ENCODE measurements at regions of chr1 and their contacts with region 1.

Region 1: GRCh38 chr1:214328770-214329469 is 48.0 kb downstream of the SMYD2 start:
- DNase-seq: peak; percentile 86
- ATAC-seq: peak; percentile 92
- H3K4me3 Mint-ChIP-seq: no peak overlapping the region
- H3K27ac Mint-ChIP-seq: no peak overlapping the region
- H3K4me1 Mint-ChIP-seq: peaks cover 9% of the 10 kb centered on the region
- H3K27me3 Mint-ChIP-seq: no peaks in the 10 kb centered on the region

Region 2: DNA sequence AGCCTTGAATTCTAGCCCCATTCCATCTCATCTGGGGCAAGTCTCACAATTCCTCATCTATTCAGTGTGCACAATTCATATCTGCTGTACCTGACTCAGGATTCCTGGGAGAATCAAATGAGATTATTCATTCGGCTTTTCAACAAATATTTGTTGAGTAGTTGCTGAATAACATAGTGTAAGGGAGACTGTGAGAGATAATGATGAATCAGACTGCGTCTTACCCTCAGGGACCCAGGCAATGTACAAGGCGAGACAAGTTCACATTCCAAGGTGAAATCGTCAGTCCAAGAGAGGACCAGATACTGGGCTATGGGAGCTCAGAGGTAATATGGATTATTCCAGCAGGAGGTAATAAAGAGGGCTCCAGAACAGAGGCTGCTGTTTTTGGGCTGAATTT is 115.8 kb before region 1 on chr1:
- CTCF ChIA-PET with region 1: interaction called, 42 read pairs
- DNase-seq: no peak
- ATAC-seq: no peak
- H3K4me3 Mint-ChIP-seq: no peak overlapping the region
- H3K27ac Mint-ChIP-seq: no peak overlapping the region
- H3K4me1 Mint-ChIP-seq: no peaks in the 10 kb centered on the region
- H3K27me3 Mint-ChIP-seq: peaks cover 42% of the 10 kb centered on the region

Region 3: DNA sequence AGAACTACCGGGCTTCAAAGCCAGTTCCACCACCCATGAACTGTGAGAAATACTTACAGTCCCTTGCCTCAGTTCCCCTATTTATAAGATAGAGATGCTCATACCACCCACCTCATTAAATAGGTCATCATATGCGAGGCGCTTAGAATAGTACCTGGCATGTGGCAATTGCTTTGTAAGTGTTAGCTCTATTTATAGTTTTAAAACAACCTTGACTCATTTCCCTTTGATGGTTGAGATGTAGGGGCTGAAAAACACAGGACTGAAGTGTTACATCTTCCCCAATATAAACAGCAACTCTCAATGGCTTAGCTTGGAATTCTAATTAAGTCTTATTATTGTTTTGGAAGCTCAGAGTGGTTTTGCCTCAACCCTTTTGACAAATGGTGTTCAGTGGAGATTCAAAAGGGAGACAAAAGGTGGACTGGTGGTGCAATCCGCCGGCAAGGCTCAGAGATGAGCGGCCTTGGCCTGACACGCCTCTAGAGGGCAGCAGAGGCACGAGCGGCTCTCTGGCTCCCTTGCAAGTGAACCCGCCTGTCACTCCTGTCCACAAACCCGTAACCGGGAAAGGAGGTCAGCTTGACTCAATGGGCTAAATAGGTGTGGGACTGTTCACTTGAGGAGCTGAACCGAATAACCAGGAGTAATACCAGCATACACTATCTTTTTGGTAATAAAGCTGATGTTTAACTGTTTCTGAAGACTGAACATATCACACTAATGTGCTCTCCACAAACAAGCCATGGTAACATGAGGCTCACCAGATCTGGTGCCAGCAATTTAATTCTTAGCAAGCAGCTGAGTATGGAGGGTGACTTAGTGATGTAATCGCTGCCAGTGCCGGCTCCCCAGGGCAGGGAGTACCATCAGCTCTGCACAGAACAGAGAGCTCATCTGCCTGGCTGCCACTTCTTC is 67.5 kb before region 1 on chr1:
- CTCF ChIA-PET with region 1: interaction called, 373 read pairs
- DNase-seq: peak; percentile 87
- ATAC-seq: peak; percentile 91
- H3K4me3 Mint-ChIP-seq: no peak overlapping the region
- H3K27ac Mint-ChIP-seq: no peak overlapping the region
- H3K4me1 Mint-ChIP-seq: peaks cover 24% of the 10 kb centered on the region
- H3K27me3 Mint-ChIP-seq: peaks cover 70% of the 10 kb centered on the region

Region 4: GRCh38 chr1:214281021-214281719 is 47.8 kb before region 1 on chr1 and contains the start of gene SMYD2:
- CTCF ChIA-PET with region 1: interaction called, 30 read pairs
- DNase-seq: peak; percentile 72
- ATAC-seq: peak; percentile 78
- H3K4me3 Mint-ChIP-seq: peak within 1 kb of the TSS; percentile 95
- H3K27ac Mint-ChIP-seq: peak within 1 kb of the TSS; percentile 90
- H3K4me1 Mint-ChIP-seq: peaks cover 33% of the 10 kb centered on the region
- H3K27me3 Mint-ChIP-seq: no peaks in the 10 kb centered on the region
- total RNA-seq, gene SMYD2: 23.1 to 26.5 TPM

Region 5: DNA sequence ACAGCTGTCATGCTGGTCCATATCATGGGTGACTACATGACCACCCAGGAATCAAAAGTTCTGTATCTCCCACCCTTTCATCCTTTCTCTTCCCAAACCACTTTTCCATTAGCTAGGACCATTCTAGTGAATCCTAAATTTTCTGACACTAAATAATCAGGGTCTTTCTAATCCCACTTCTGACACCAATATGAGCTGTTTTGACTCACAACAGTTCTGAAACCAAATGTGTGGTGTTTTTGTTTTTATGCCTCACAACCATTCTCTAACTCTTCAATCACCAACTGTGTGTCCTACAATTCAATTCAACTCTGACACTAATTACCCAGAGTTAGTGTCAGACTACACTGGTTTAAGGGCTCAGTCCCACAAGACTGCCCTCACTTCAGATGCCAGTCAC is 16.0 kb after region 1 on chr1:
- CTCF ChIA-PET with region 1: interaction called, 17 read pairs
- DNase-seq: no peak
- ATAC-seq: no peak
- H3K4me3 Mint-ChIP-seq: no peak overlapping the region
- H3K27ac Mint-ChIP-seq: no peak overlapping the region
- H3K4me1 Mint-ChIP-seq: no peaks in the 10 kb centered on the region
- H3K27me3 Mint-ChIP-seq: no peaks in the 10 kb centered on the region

Region 6: DNA sequence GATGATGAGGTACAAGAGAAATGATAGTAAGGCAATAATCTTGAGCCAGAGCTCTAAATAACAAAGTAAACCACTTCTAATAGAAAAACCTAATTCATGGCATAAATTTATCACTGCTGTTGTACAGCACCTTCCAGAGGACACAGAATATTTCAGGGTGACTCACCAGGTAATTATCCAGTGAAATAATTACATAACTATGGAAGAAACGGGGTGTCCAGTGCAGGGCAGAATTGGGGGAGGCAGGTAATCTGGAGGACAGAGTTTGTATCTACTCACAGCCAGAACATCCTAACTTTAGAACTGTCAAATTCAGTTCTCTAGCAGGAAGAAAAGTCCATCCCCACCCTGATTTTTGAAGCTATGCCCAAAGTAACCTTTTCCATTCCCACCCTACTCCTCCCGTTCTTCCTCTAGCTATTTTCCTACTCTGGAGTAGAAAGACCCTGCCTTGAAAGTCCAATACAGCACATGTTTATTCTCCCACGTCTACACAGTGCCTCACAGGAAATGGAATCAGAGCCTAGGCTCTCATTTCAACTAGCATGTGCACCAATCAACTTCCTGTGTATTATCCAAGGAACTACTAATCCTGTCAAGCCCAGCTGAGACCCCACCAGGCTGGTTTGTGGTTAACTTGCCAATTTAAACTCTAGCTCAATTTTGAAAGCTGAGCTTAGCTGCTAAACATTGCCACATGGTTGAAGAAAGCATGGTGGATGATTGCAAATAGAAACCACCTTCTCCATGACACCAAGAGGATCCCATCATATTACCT is 125.9 kb after region 1 on chr1:
- CTCF ChIA-PET with region 1: interaction called, 20 read pairs
- DNase-seq: no peak
- ATAC-seq: no peak
- H3K4me3 Mint-ChIP-seq: no peak overlapping the region
- H3K27ac Mint-ChIP-seq: no peak overlapping the region
- H3K4me1 Mint-ChIP-seq: peaks cover 14% of the 10 kb centered on the region
- H3K27me3 Mint-ChIP-seq: peaks cover 37% of the 10 kb centered on the region

Region 7: DNA sequence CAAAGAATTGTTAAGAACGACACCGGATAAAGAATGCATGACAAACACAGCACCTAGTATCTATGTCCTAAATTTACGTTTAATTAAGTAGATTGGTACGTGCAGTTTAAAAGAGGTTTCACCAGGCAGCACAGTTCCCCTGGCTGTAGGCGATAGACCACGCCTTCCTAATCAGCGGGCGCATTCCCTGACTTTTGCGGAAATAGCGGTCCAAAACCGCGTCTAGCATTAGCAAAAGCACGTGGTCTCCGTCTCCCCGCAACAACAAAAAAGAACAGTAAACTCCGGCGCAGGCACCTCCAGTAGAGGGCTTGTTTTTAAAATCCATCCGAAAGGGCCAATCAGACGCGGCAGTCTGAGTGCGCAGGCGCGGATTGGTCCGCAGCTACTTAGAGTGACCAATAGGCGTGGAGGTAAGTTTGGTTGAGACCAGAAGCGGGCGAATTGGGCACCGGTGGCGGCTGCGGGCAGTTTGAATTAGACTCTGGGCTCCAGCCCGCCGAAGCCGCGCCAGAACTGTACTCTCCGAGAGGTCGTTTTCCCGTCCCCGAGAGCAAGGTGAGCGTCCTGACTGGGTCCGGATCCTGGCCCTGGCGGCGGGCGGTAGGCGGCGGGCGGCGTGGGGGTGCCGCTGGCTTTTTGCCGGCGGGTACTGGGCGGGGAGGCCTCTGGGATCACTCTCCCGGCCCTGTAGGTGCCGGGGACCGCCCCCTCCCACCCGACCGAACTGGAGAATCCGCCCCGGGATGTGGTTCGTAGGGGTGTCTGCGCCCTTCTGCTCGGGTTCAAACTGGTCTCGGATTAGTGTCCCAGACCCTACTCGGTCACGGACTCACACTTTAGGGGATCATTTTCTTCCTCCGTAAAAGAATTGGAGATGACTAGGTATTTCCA is 274.1 kb after region 1 on chr1 and contains the start of gene CENPF:
- CTCF ChIA-PET with region 1: interaction called, 10 read pairs
- DNase-seq: peak; percentile 97
- ATAC-seq: peak; percentile 98
- H3K4me3 Mint-ChIP-seq: peak within 1 kb of the TSS; percentile 92
- H3K27ac Mint-ChIP-seq: peak within 1 kb of the TSS; percentile 96
- H3K4me1 Mint-ChIP-seq: peaks cover 24% of the 10 kb centered on the region
- H3K27me3 Mint-ChIP-seq: no peaks in the 10 kb centered on the region
- total RNA-seq, gene CENPF: 150 to 158 TPM

Measured in activated CD8-positive, alpha-beta memory T cell treated with anti-CD3 and anti-CD28 coated beads, Interleukin-2, amount 10 ng/mL, durations not matched to agents 7 days and 5 days (primary cell).